Activated CD4-positive, alpha-beta memory T cell treated with anti-CD3 and anti-CD28 coated beads, Interleukin-2, amount 10 ng/mL, durations not matched to agents 7 days and 5 days (primary cell): ENCODE measurements at regions of chr20 and their contacts with region 1.

Region 1: GRCh38 chr20:35454881-35455609 is at the start of gene CEP250:
- DNase-seq: peak; percentile 94
- H3K4me3 Mint-ChIP-seq: peak within 1 kb of the TSS; percentile 87
- H3K27ac Mint-ChIP-seq: peak within 1 kb of the TSS; percentile 95
- H3K4me1 Mint-ChIP-seq: peaks cover 29% of the 10 kb centered on the region
- H3K27me3 Mint-ChIP-seq: no peaks in the 10 kb centered on the region
- total RNA-seq, gene CEP250: 70.3 to 71.2 TPM

Region 2: DNA sequence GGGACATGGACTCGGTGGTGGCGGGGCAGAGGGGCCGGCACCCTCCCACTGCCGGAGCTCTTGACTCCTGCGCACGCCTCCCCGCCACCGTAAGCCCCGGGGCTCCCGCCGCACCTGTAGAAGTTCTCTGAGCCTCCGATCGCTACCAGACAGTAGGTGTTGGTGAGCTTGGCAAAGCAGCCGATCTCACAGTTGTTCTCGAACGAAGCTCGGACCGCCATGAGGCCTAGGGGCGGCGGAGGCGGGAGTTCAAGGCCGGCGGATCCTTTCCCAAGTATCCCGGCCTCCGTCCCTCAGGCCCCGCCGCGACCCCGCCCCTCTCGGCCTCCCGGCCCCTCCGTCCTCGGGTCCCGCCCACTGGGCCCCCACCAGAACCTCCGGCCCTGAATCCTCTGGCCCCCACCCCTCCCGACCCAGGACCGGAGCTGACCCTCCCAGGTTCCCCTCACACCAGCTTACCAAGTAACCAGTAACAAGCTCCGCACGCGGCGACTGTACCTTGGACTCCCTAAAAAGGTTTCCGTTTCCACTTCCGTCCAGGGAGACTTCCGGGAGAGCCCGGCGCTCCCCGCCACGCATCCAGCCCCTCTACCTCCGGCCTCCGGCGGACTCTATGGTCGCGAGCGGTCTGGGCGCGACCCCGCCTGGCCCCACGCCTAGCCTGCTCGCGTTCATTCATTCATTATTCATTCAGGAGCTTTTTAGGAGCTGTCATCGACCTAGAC is 170.6 kb before region 1 on chr20 and contains the start of gene EIF6:
- CTCF ChIA-PET with region 1: interaction called, 3 read pairs
- POLR2A ChIA-PET with region 1: interaction called, 14 read pairs
- DNase-seq: peak; percentile 79
- H3K4me3 Mint-ChIP-seq: peak within 1 kb of the TSS; percentile 91
- H3K27ac Mint-ChIP-seq: peak within 1 kb of the TSS; percentile 89
- H3K4me1 Mint-ChIP-seq: peaks cover 36% of the 10 kb centered on the region
- H3K27me3 Mint-ChIP-seq: no peaks in the 10 kb centered on the region
- total RNA-seq, gene EIF6: 86.1 to 91.3 TPM

Region 3: DNA sequence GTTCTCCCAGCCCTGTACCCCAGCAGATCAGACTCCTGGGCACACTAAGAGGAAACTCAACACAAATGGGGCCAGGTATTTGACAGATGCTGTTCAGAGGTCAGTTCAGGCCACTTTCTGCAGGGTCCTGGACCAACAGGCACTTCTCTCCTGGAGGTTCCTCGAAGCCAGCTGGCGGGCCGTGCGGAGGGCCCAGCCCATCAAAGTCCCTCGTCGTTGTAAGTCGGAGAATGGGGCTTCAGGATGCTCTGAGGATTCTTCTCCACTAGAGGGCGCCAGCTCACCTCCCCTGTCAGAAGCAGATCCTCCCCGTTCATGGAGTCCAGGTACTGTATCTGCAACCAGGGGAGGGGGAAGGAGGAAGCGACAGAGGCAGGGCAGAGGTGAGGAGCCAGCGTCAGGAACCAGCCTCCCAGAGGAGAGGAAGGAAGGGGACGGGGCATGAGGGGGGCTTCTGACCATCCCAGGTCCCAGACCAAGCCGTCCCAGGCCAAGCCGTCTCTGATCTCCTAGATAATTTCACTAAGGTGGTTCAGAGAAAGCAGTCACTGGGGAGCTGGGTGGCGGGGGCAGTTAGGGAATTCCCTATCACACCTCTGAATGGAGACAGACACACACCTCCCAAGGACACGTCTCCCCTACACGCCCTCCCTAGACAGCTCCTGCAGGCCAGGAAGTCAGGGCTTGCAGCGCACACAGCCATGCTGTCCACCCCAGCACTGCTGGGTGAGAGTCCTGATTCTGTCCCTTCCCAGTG is 151.1 kb before region 1 on chr20:
- CTCF ChIA-PET with region 1: interaction called, 82 read pairs
- POLR2A ChIA-PET with region 1: interaction called, 11 read pairs
- DNase-seq: peak; percentile 88
- H3K4me3 Mint-ChIP-seq: no peak overlapping the region
- H3K27ac Mint-ChIP-seq: peak overlapping the region; percentile 37
- H3K4me1 Mint-ChIP-seq: peaks cover 52% of the 10 kb centered on the region
- H3K27me3 Mint-ChIP-seq: no peaks in the 10 kb centered on the region

Region 4: GRCh38 chr20:35355372-35355771 is 99.7 kb before region 1 on chr20:
- CTCF ChIA-PET with region 1: no interaction called
- POLR2A ChIA-PET with region 1: no interaction called
- DNase-seq: no peak
- H3K4me3 Mint-ChIP-seq: no peak overlapping the region
- H3K27ac Mint-ChIP-seq: no peak overlapping the region
- H3K4me1 Mint-ChIP-seq: peaks cover 1% of the 10 kb centered on the region
- H3K27me3 Mint-ChIP-seq: no peaks in the 10 kb centered on the region

Region 5: GRCh38 chr20:35410613-35411012 is 44.4 kb before region 1 on chr20:
- CTCF ChIA-PET with region 1: no interaction called
- POLR2A ChIA-PET with region 1: interaction called, 11 read pairs
- DNase-seq: no peak
- H3K4me3 Mint-ChIP-seq: peak overlapping the region; percentile 91
- H3K27ac Mint-ChIP-seq: no peak overlapping the region
- H3K4me1 Mint-ChIP-seq: peaks cover 22% of the 10 kb centered on the region
- H3K27me3 Mint-ChIP-seq: peaks cover 5% of the 10 kb centered on the region

Region 6: DNA sequence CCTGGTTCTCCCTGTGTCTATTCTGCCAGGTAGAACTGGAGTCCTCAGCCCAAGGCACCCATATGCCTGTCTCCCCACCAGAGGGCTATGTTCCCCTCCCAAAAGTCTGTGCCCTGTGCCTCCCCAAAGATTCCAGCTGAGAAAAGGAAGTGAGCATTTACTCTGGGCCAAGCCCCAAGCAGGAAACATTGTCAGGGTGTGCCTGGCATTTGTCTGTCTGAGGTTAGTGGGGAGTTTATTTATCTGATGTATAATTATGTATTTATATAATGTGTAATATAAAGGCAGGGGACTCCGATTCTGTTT is 22.7 kb before region 1 on chr20:
- CTCF ChIA-PET with region 1: interaction called, 12 read pairs
- POLR2A ChIA-PET with region 1: no interaction called
- DNase-seq: no peak
- H3K4me3 Mint-ChIP-seq: no peak overlapping the region
- H3K27ac Mint-ChIP-seq: no peak overlapping the region
- H3K4me1 Mint-ChIP-seq: peaks cover 4% of the 10 kb centered on the region
- H3K27me3 Mint-ChIP-seq: no peaks in the 10 kb centered on the region

Region 7: DNA sequence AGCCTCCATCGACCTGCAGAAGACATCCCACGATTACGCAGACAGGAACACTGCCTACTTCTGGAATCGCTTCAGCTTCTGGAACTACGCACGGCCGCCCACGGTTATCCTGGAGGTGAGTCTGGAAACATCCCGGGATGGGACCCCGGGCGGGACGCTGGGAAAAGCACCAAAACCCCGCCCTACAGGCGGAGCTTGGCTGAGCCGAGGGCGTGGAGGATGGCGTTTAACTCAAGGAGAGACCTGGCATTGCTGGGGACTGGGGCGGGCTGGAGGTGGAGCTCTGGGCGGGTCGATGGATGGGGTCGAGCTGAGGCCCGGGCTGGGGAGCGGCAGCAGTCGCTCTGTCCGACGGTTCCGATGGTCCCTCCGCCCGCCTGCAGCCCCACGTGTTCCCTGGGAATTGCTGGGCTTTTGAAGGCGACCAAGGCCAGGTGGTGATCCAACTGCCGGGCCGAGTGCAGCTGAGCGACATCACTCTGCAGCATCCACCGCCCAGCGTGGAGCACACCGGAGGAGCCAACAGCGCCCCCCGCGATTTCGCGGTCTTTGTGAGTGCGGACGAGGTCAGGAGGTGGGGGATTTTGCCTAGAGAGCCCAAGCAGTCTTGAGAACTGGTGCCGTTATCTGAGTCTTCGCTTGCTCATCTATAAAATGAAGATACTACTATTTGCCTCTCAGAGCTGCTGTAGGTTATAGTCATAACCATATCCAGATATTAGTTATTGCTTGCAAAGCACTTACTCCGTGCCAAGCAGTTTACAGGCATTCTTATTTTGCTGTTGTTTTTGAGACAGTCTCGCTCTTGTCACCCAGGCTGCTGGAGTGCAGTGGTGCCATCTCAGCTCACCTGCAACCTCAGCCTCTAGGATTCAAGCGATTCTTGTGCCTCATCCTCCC is 164.4 kb after region 1 on chr20:
- CTCF ChIA-PET with region 1: interaction called, 3 read pairs
- POLR2A ChIA-PET with region 1: interaction called, 24 read pairs
- DNase-seq: peak; percentile 78
- H3K4me3 Mint-ChIP-seq: peak overlapping the region; percentile 83
- H3K27ac Mint-ChIP-seq: peak overlapping the region; percentile 70
- H3K4me1 Mint-ChIP-seq: peaks cover 45% of the 10 kb centered on the region
- H3K27me3 Mint-ChIP-seq: peaks cover 1% of the 10 kb centered on the region

Region 8: GRCh38 chr20:35954200-35954906 is 499.3 kb after region 1 on chr20 and contains the start of gene SCAND1:
- CTCF ChIA-PET with region 1: interaction called, 11 read pairs
- POLR2A ChIA-PET with region 1: interaction called, 25 read pairs
- DNase-seq: peak; percentile 97
- H3K4me3 Mint-ChIP-seq: peak within 1 kb of the TSS; percentile 99
- H3K27ac Mint-ChIP-seq: peak within 1 kb of the TSS; percentile 100
- H3K4me1 Mint-ChIP-seq: peaks cover 25% of the 10 kb centered on the region
- H3K27me3 Mint-ChIP-seq: no peaks in the 10 kb centered on the region
- total RNA-seq, gene SCAND1: 65.5 to 70.0 TPM